Endothelial cell of umbilical vein (primary cell): ENCODE measurements at regions of chr15 and their contacts with region 1.

Region 1: GRCh38 chr15:45795440-45796069 is 160.7 kb downstream of the SQOR start:
- DNase-seq: peak; percentile 78
- H3K4me3 ChIP-seq: no peak overlapping the region
- H3K27ac ChIP-seq: no peak overlapping the region
- H3K4me1 ChIP-seq: no peaks in the 10 kb centered on the region
- H3K27me3 ChIP-seq: peaks cover 10 to 12% of the 10 kb centered on the region in 2 experiments
- CTCF ChIP-seq: peak; percentile 68 to 72
- POLR2A ChIP-seq: no peak

Region 2: GRCh38 chr15:45714590-45715488 is 80.7 kb before region 1 on chr15:
- CTCF ChIA-PET with region 1: interaction called, 14 read pairs
- POLR2A ChIA-PET with region 1: no interaction called
- dilution Hi-C with region 1: no loop called
- intact Hi-C with region 1: loop called (anchors 1 kb)
- DNase-seq: peak; percentile 69
- H3K4me3 ChIP-seq: peak overlapping the region in 1 of 3 experiments; percentile 29
- H3K27ac ChIP-seq: no peak overlapping the region
- H3K4me1 ChIP-seq: peaks cover 7% of the 10 kb centered on the region
- H3K27me3 ChIP-seq: no peaks in the 10 kb centered on the region
- CTCF ChIP-seq: peak; percentile 85 to 92
- POLR2A ChIP-seq: no peak

Region 3: DNA sequence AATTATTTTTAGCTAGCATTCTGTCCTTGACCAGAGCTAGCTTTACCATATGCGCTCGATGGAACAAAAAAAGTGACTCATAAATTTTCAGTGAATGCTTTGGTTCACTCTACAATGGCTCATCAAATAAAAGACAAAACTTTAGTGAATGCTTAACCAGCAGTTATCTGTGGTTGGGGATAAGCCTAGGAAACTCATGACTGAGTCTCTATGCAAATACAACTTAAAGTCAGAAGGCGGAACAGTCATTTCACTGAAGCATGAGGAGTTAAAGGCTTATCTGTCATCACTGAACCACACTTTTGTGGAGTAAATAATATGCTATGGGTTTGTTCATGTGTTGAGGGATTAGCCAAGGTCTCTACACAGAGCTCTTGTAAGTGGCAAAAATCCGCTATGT is 147.7 kb after region 1 on chr15:
- CTCF ChIA-PET with region 1: no interaction called
- POLR2A ChIA-PET with region 1: no interaction called
- dilution Hi-C with region 1: no loop called
- intact Hi-C with region 1: no loop called
- DNase-seq: no peak
- H3K4me3 ChIP-seq: no peak overlapping the region
- H3K27ac ChIP-seq: no peak overlapping the region
- H3K4me1 ChIP-seq: no peaks in the 10 kb centered on the region
- H3K27me3 ChIP-seq: no peaks in the 10 kb centered on the region
- CTCF ChIP-seq: no peak
- POLR2A ChIP-seq: no peak

Region 4: DNA sequence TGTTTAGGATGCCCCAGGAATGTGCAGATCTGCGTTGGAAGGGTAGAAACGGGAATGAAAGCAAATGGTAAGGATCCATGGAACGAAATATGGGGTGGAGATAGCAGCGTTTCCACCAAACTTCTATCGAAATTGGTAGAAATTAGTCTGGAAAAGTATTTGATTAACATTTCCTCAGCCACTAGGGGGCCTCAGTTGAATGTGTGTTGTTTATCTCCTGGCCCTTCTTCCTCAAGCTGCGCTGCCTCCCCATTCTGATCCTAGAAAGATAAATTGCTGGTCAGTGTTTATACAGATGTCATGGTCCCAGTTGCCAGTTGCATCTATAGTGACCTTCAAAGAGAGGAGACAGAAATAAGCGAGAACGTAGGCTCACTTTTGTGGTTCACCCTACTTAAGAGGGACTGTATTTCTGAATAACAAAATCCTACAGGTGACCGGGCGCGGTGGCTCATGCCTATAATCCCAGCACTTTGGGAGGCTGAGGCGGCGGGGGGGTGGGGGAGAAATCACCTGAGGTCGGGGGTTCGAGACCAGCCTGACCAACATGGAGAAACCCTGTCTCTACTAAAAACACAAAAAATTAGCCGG is 296.4 kb after region 1 on chr15:
- CTCF ChIA-PET with region 1: interaction called, 31 read pairs
- POLR2A ChIA-PET with region 1: interaction called, 3 read pairs
- dilution Hi-C with region 1: no loop called
- intact Hi-C with region 1: loop called (anchors 1 kb)
- DNase-seq: peak; percentile 30
- H3K4me3 ChIP-seq: no peak overlapping the region
- H3K27ac ChIP-seq: no peak overlapping the region
- H3K4me1 ChIP-seq: peaks cover 38% of the 10 kb centered on the region
- H3K27me3 ChIP-seq: no peaks in the 10 kb centered on the region
- CTCF ChIP-seq: peak; percentile 38 to 60
- POLR2A ChIP-seq: no peak

Region 5: GRCh38 chr15:46297766-46298165 is 502.2 kb after region 1 on chr15:
- CTCF ChIA-PET with region 1: interaction called, 14 read pairs
- POLR2A ChIA-PET with region 1: no interaction called
- dilution Hi-C with region 1: no loop called
- intact Hi-C with region 1: no loop called
- DNase-seq: no peak
- H3K4me3 ChIP-seq: no peak overlapping the region
- H3K27ac ChIP-seq: no peak overlapping the region
- H3K4me1 ChIP-seq: no peaks in the 10 kb centered on the region
- H3K27me3 ChIP-seq: no peaks in the 10 kb centered on the region
- CTCF ChIP-seq: no peak
- POLR2A ChIP-seq: no peak

Region 6: GRCh38 chr15:46312133-46312740 is 516.7 kb after region 1 on chr15:
- CTCF ChIA-PET with region 1: interaction called, 48 read pairs
- POLR2A ChIA-PET with region 1: no interaction called
- dilution Hi-C with region 1: no loop called
- intact Hi-C with region 1: loop called (anchors 1 kb)
- DNase-seq: peak; percentile 71
- H3K4me3 ChIP-seq: no peak overlapping the region
- H3K27ac ChIP-seq: no peak overlapping the region
- H3K4me1 ChIP-seq: no peaks in the 10 kb centered on the region
- H3K27me3 ChIP-seq: peaks cover 0 to 3% of the 10 kb centered on the region in 2 experiments
- CTCF ChIP-seq: peak; percentile 82 to 86
- POLR2A ChIP-seq: no peak